Cardiac septum (tissue), 1 donor: ENCODE measurements at regions of chr11 and their contacts with region 1.

Region 1: GRCh38 chr11:65134386-65135253 is at the start of gene SYVN1:
- DNase-seq: peak; percentile 95
- total RNA-seq, gene SYVN1: 25.2 TPM

Region 2: DNA sequence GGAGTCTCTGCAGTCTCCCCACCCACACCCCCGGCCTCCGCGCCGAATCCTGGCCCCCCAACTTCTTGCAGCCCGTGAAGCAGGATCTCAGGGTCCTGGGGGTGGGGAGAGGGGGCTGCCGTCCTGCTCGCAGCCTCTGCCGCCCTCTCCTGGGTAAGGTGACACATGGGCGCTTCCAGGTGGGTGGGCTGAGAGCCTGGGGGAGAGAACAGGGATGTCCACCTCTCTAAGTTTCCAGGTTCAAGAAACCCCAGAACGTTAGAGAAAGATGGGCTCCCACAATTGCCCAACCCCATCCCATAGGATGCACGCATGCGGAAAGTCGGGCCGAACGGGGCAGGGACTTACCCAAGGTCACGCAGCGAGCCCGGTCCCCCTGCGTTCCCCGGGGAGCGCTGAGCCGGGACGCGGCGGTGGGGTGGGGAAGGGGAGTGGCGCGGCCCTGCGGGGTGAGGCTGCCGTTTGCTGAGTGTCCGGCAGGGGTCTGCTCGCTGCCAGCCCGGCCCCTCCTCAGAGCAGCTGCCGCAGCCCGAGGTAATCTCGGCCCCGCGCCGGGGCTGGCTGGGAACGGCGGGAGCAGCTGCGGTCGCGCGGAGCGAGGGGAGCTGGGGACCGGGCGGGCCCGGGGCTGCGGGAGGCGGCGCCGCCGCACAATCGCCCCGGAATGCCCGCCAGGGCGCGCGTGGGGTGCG is 46.4 kb after region 1 on chr11:
- intact Hi-C with region 1: loop called (anchors 5 kb)
- DNase-seq: peak; percentile 82

Region 3: GRCh38 chr11:65261591-65262380 is 127.2 kb after region 1 on chr11 and contains the start of gene POLA2:
- intact Hi-C with region 1: no loop called
- DNase-seq: peak; percentile 96
- total RNA-seq, gene POLA2: 3.5 TPM